OCI-LY7 (cell line): ENCODE measurements at regions of chr5 and their contacts with region 1.

Region 1: DNA sequence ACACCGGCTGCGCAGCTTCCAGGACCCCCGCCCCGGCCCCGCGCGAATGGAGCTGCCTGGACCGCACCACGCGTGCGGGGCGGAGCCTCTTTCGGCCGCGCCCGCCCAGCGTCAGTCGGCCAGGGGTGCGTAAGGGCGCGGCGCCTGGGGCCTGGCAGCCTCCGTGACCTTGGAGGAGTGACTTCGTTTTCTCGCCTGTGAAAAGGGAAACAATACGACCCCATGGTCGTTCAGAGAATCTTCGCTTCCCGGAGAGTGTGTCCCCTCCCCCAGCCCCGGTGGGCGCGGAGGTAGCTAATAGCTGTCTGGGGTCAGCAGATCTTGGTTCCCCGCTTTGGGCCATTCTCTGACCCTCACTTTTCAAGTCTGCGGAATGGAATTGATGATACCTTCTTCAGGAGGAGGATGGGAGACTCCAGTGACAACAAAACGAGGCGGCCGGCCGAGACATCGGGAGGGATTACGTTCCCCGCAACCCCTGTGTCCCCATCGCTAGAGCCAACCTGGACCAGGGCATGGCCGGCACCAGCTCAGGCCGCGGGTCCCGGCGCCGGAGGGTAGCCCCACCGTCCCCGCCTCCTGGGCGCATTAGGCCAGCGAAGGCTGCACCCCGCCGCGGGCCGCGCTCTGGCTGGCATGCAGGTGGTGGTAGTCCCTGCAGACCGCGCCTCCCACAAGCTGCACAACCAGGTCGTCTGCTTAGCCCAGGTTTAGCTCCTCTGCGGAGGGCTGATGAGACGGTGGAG is 5.5 kb upstream of the CDHR2 start:
- DNase-seq: peak; percentile 88
- H3K4me3 ChIP-seq: peak overlapping the region; percentile 75
- H3K27ac ChIP-seq: peak overlapping the region; percentile 83
- H3K4me1 ChIP-seq: peaks cover 70% of the 10 kb centered on the region
- CTCF ChIP-seq: no peak

Region 2: GRCh38 chr5:176415952-176416924 is 127.4 kb before region 1 on chr5 and contains the start of gene CLTB:
- CTCF ChIA-PET with region 1: no interaction called
- POLR2A ChIA-PET with region 1: interaction called, 4 read pairs
- intact Hi-C with region 1: loop called (anchors 1 kb)
- DNase-seq: peak; percentile 93
- H3K4me3 ChIP-seq: peak within 1 kb of the TSS; percentile 86
- H3K27ac ChIP-seq: peak within 1 kb of the TSS; percentile 2
- H3K4me1 ChIP-seq: peaks cover 21% of the 10 kb centered on the region
- CTCF ChIP-seq: peak; percentile 71
- total RNA-seq, gene CLTB: 53.4 and 69.2 TPM in 2 replicates

Region 3: GRCh38 chr5:176501333-176501732 is 42.3 kb before region 1 on chr5:
- CTCF ChIA-PET with region 1: interaction called, 22 read pairs
- POLR2A ChIA-PET with region 1: no interaction called
- intact Hi-C with region 1: no loop called
- DNase-seq: no peak
- H3K4me3 ChIP-seq: no peak overlapping the region
- H3K27ac ChIP-seq: no peak overlapping the region
- H3K4me1 ChIP-seq: no peaks in the 10 kb centered on the region
- CTCF ChIP-seq: no peak

Region 4: GRCh38 chr5:176530983-176531821 is 12.4 kb before region 1 on chr5:
- CTCF ChIA-PET with region 1: interaction called, 12 read pairs
- POLR2A ChIA-PET with region 1: interaction called, 24 read pairs
- intact Hi-C with region 1: loop called (anchors 1 kb)
- DNase-seq: peak; percentile 50
- H3K4me3 ChIP-seq: peak overlapping the region; percentile 64
- H3K27ac ChIP-seq: peak overlapping the region; percentile 99
- H3K4me1 ChIP-seq: peaks cover 89% of the 10 kb centered on the region
- CTCF ChIP-seq: no peak